Psoas muscle (tissue), 8 donors: ENCODE measurements at regions of chr4 and their contacts with region 1.

Region 1: GRCh38 chr4:42519803-42520417 is 122.6 kb downstream of the SHISA3 start:
- DNase-seq: no peak
- ATAC-seq: peak in 3 of 4 donors; percentile 52 to 77 (median 63)
- H3K4me3 ChIP-seq: no peak overlapping the region
- H3K27ac ChIP-seq: no peak overlapping the region
- H3K4me1 ChIP-seq: peaks cover 11% of the 10 kb centered on the region
- H3K27me3 ChIP-seq: no peaks in the 10 kb centered on the region
- CTCF ChIP-seq: peak; percentile 77

Region 2: DNA sequence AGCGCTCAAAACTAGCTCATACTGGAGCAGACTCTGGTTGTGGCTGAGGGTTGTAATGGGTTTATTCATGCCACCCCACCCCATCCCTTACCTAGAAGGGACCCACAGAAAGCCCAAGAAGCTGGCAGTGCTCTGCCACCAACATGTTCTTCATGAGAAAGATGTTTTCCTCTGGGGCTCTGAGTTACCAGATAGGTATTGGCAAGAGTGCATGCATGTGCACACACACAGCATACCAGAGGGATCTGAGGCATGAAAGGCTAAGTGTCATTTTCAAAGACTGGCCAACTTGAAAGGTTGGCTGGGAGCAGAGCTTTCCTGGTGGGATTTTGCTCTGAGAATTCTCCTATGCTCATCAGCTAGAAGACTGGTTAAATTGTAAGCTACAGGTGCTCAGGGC is 836.6 kb before region 1 on chr4:
- intact Hi-C with region 1: loop called in 1 of 2 experiments (anchors 10 kb)
- DNase-seq: no peak
- ATAC-seq: no peak
- H3K4me3 ChIP-seq: no peak overlapping the region
- H3K27ac ChIP-seq: no peak overlapping the region
- H3K4me1 ChIP-seq: no peaks in the 10 kb centered on the region
- H3K27me3 ChIP-seq: no peaks in the 10 kb centered on the region
- CTCF ChIP-seq: no peak

Region 3: GRCh38 chr4:42282081-42282901 is 237.6 kb before region 1 on chr4:
- intact Hi-C with region 1: loop called (anchors 2 to 5 kb)
- DNase-seq: peak in 1 of 2 donors; percentile 74
- ATAC-seq: peak; percentile 68 to 93 (median 87)
- H3K4me3 ChIP-seq: no peak overlapping the region
- H3K27ac ChIP-seq: no peak overlapping the region
- H3K4me1 ChIP-seq: no peaks in the 10 kb centered on the region
- H3K27me3 ChIP-seq: no peaks in the 10 kb centered on the region
- CTCF ChIP-seq: peak; percentile 70

Region 4: GRCh38 chr4:42371306-42372252 is 148.3 kb before region 1 on chr4:
- intact Hi-C with region 1: loop called (anchors 5 kb)
- DNase-seq: no peak
- ATAC-seq: no peak
- H3K4me3 ChIP-seq: no peak overlapping the region
- H3K27ac ChIP-seq: no peak overlapping the region
- H3K4me1 ChIP-seq: no peaks in the 10 kb centered on the region
- H3K27me3 ChIP-seq: no peaks in the 10 kb centered on the region
- CTCF ChIP-seq: peak; percentile 41